Transverse colon (tissue), 4 donors: ENCODE measurements at regions of chr17 and their contacts with region 1.

Region 1: GRCh38 chr17:34665150-34665806 is 85.9 kb downstream of the TMEM132E start:
- DNase-seq: no peak
- H3K4me3 ChIP-seq: no peak overlapping the region
- H3K27ac ChIP-seq: no peak overlapping the region
- H3K4me1 ChIP-seq: no peaks in the 10 kb centered on the region
- H3K27me3 ChIP-seq: peaks cover 29% of the 10 kb centered on the region
- CTCF ChIP-seq: no peak
- EP300 ChIP-seq: no peak
- POLR2A ChIP-seq: no peak

Region 2: GRCh38 chr17:34562387-34562786 is 102.9 kb before region 1 on chr17:
- in situ Hi-C with region 1: loop called in 1 of 4 experiments (anchors 25 kb)
- intact Hi-C with region 1: no loop called
- DNase-seq: no peak
- H3K4me3 ChIP-seq: no peak overlapping the region
- H3K27ac ChIP-seq: no peak overlapping the region
- H3K4me1 ChIP-seq: no peaks in the 10 kb centered on the region
- H3K27me3 ChIP-seq: peaks cover 10% of the 10 kb centered on the region
- CTCF ChIP-seq: peak in 1 of 5 experiments; percentile 18
- EP300 ChIP-seq: no peak
- POLR2A ChIP-seq: no peak